Mammary epithelial cell (primary cell): ENCODE measurements at regions of chr2 and their contacts with region 1.

Region 1: DNA sequence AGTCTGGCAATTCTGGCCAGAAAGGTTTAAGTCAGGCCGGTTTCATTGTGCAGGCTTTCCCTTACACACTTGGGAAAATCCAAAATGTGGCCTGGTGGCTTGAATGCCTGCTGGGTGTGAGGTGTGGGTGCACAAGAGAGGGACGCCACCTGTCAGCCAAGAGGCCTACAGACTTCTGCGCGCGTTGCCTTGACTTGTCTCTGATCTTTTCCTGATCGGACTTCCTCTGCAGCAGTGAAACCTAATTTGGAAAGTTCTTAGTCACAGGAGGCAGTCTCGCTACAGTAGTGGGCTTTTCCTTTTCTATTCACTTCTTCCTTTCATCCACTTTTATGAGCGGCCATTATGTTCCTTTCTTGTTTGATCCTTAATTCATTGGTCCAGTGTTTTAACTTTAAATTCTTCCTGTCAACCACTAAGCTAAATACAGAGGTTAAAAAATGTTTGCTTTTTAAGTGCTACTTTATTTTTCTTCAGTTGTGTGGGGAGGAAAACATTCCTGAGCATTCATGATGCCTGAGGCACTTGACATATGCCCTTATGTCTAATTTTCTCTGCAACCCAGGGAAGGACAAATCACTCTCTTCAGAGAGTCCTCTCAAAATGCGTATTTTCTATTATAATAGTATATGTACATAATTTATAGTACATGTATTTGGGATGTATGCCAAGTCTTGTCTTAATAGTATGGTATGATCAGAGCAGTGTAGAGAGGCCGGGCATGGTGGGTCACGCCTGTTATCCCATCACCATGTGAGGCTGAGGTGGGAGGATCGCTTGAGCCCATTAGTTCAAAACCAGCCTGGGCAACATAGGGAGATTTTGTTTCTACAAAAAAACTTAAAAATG is 128.9 kb downstream of the WDSUB1 start:
- DNase-seq: peak; percentile 88
- H3K4me3 ChIP-seq: no peak overlapping the region
- H3K27ac ChIP-seq: peak overlapping the region; percentile 66
- H3K4me1 ChIP-seq: peaks cover 55% of the 10 kb centered on the region
- H3K27me3 ChIP-seq: no peaks in the 10 kb centered on the region
- CTCF ChIP-seq: peak in 1 of 2 donors; percentile 28

Region 2: DNA sequence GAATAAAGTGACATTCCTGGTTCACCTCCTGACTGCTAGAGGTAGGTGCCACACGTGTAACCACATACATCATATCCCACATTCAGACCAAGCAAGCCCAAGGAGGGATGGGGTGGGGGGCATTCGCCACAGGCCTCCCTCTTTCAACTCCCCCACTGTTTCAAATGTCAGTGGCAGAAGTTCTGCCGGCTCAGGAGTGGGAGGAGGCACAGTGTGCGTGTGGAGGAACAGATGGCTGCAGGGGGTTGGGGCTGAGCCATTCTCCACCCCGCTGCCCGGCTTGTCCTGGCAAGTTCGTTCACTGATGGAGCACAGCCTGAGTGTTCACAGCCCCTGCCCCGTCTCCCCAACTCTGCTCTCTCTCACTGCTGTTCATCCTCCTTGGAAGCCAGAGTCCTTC is 264.6 kb before region 1 on chr2:
- CTCF ChIA-PET with region 1: no interaction called
- dilution Hi-C with region 1: no loop called
- in situ Hi-C with region 1: no loop called
- intact Hi-C with region 1: loop called (anchors 5 kb)
- DNase-seq: peak; percentile 90
- H3K4me3 ChIP-seq: no peak overlapping the region
- H3K27ac ChIP-seq: peak overlapping the region; percentile 96
- H3K4me1 ChIP-seq: peaks cover 55% of the 10 kb centered on the region
- H3K27me3 ChIP-seq: no peaks in the 10 kb centered on the region
- CTCF ChIP-seq: no peak

Region 3: DNA sequence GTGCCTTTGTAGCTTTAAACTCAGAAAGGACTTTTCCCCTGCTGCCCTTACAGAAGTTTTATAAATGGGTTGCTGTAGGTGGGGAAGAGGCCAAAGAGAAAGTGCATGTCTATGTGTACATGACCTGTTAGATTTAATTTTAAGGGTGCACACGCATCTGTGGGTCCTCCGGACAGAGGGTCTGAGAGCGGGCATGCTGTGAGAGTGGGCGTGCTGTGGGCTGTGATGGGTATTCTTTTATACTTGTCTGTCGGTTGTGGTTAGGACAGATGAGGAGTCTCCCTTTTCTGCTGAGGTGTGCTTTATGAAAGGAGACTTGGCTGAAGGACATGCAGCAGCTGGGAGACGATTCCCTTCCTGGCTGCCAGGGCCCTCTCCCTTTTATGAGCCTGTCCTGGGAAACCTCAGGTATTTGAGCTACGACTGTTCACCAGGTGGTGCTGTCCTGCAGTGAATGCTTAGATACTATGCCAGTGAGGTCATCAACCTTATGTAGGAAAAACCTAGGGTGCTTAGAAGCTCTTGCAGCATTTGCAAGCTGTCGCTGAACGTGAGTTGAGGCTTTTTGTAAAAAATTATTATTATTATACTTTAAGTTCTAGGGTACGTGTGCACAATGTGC is 121.7 kb before region 1 on chr2:
- CTCF ChIA-PET with region 1: no interaction called
- dilution Hi-C with region 1: no loop called
- in situ Hi-C with region 1: no loop called
- intact Hi-C with region 1: loop called (anchors 2 kb)
- DNase-seq: peak; percentile 86
- H3K4me3 ChIP-seq: no peak overlapping the region
- H3K27ac ChIP-seq: no peak overlapping the region
- H3K4me1 ChIP-seq: peaks cover 9% of the 10 kb centered on the region
- H3K27me3 ChIP-seq: no peaks in the 10 kb centered on the region
- CTCF ChIP-seq: peak; percentile 56 to 76

Region 4: GRCh38 chr2:159090514-159091201 is 66.9 kb before region 1 on chr2:
- CTCF ChIA-PET with region 1: interaction called, 14 read pairs
- dilution Hi-C with region 1: no loop called
- in situ Hi-C with region 1: no loop called
- intact Hi-C with region 1: no loop called
- DNase-seq: peak; percentile 73
- H3K4me3 ChIP-seq: no peak overlapping the region
- H3K27ac ChIP-seq: peak overlapping the region; percentile 61
- H3K4me1 ChIP-seq: peaks cover 48% of the 10 kb centered on the region
- H3K27me3 ChIP-seq: no peaks in the 10 kb centered on the region
- CTCF ChIP-seq: no peak

Region 5: DNA sequence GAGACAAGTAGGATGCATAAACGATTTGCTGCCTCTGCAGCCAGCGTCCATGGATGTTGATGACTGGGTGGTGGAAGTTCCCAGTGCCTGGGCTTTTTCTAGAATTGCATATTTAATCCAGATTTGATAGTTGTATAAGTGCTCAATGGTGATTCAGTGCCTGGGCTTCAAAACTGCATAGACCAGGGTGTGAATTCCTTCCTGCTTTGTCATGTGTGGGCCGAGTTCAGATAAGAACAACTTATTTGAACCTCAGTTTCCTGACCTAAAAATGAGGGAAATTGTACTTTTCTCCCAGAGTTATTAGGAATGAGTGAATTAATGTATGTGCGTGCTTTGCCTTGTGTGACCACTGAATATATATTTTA is 25.7 kb before region 1 on chr2:
- CTCF ChIA-PET with region 1: no interaction called
- dilution Hi-C with region 1: no loop called
- in situ Hi-C with region 1: no loop called
- intact Hi-C with region 1: loop called (anchors 2 kb)
- DNase-seq: peak; percentile 77
- H3K4me3 ChIP-seq: no peak overlapping the region
- H3K27ac ChIP-seq: peak overlapping the region; percentile 63
- H3K4me1 ChIP-seq: peaks cover 30% of the 10 kb centered on the region
- H3K27me3 ChIP-seq: no peaks in the 10 kb centered on the region
- CTCF ChIP-seq: no peak

Region 6: GRCh38 chr2:159209341-159210306 is 52.0 kb after region 1 on chr2:
- CTCF ChIA-PET with region 1: no interaction called
- dilution Hi-C with region 1: no loop called
- in situ Hi-C with region 1: no loop called
- intact Hi-C with region 1: no loop called
- DNase-seq: no peak
- H3K4me3 ChIP-seq: no peak overlapping the region
- H3K27ac ChIP-seq: no peak overlapping the region
- H3K4me1 ChIP-seq: peaks cover 8% of the 10 kb centered on the region
- H3K27me3 ChIP-seq: no peaks in the 10 kb centered on the region
- CTCF ChIP-seq: no peak